ENCODE measurements at regions of chr2 and their contacts with region 1.

Region 1: DNA sequence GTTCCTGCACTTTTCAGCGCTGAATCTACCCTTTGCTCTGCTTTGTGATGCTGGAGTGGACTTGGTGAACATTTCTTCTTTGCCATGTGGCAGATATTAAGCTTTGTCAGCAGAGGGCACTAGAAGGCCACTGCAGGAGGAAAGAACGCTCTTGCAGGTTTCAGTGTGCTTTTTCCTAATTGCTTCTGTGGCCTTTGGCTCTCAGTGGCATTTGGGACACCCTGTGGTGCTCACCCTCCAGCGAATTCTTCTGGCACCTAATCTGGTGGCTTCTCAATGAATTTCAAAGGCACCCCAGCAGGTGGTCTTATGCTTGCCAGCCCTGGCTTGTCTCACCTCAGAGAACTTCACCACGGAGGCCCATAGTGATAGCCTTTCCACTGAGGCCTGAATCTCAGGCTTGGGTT is 146.7 kb downstream of the MYO3B start:
- DNase-seq: peak; percentile 38
- H3K4me3 Mint-ChIP-seq: no peak overlapping the region
- H3K27ac Mint-ChIP-seq: no peak overlapping the region
- H3K4me1 Mint-ChIP-seq: peaks cover 3% of the 10 kb centered on the region
- H3K27me3 Mint-ChIP-seq: no peaks in the 10 kb centered on the region

Region 2: DNA sequence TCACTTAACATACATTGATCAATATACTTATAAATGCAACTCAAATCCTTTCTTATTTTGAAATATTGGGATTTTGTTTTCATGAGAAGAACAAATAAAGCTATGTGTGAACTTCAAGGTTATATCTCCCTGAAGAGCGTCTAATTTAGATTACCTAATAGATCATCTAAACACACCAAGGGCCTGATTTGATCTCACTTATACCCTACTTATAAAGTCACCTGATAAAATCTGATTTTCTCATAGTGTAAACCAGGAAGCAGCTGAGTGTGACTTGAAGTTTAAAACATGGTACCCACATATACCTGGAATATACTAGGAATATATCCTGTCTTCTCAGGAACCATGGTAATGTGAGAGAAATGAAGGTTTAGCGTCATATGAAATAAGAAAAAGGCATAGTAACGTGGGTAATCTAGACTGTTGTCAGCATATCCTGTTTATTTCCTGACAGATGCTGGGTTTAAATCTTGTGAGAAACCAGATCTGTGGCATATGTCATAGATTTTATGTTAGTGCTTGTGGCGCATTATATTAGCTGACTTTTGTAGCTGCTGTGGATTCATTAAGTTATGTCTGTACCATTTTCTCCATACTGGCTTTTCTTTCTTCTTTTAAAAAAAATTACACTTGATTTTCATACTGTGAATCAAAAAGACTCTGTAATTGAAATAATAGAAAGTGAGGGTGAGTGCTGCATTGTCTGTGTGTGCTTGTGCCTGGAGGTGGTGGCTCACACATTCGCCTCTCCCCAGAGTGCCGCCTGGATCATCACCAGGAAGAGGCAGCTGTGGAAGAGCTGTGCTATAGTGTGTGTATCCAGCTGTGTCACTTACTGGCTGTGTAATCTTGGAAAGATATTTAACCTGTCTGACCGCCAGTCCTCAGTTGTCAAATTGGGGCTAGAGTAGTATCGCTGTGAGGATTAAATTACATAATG is 17.3 kb after region 1 on chr2:
- intact Hi-C with region 1: loop called (anchors 2 kb)
- DNase-seq: no peak
- H3K4me3 Mint-ChIP-seq: no peak overlapping the region
- H3K27ac Mint-ChIP-seq: peak overlapping the region; percentile 84
- H3K4me1 Mint-ChIP-seq: peaks cover 47% of the 10 kb centered on the region
- H3K27me3 Mint-ChIP-seq: no peaks in the 10 kb centered on the region

Region 3: GRCh38 chr2:170409164-170409535 is 84.5 kb after region 1 on chr2:
- intact Hi-C with region 1: loop called (anchors 5 kb)
- DNase-seq: peak; percentile 60
- H3K4me3 Mint-ChIP-seq: peak overlapping the region; percentile 35
- H3K27ac Mint-ChIP-seq: peak overlapping the region; percentile 55
- H3K4me1 Mint-ChIP-seq: peaks cover 17% of the 10 kb centered on the region
- H3K27me3 Mint-ChIP-seq: peaks cover 4% of the 10 kb centered on the region

Measured in activated T-helper 2 cell treated with anti-CD3 and anti-CD28 coated beads, Interferon-gamma antibody, Interleukin-2, Interleukin-4, amounts not matched to agents 10 μg/mL and 5 μg/mL and 100 μg/mL, durations not matched to agents 14 hours and 24 hours and 36 hours (primary cell).